ENCODE measurements at regions of chr7 and their contacts with region 1.

Region 1: DNA sequence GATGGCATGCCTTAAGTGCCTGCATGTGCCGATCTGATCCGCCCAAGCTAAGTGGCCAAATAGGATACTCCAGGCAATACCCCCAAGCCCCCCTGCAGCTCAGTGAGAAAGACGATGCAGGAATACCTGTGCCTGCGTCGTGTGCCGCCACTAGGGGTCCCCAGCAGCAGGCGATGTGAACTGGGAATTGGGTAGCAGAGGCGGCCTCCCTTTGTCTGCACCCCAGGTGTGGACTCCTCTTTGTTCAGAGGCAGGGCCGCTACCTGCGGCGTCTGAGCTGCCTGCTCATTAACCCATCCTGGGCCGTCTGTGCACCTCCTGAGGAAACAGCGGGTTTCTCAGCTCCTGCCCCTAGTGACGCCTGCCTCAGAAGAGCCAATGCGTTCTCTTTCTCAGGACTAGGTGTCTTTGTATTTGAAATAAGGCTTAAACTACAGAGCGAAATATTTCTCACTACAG is 4.8 kb upstream of the CHN2 start:
- DNase-seq: peak; percentile 45
- ATAC-seq: peak; percentile 95
- H3K4me3 ChIP-seq: no peak overlapping the region
- H3K27ac ChIP-seq: no peak overlapping the region
- H3K4me1 ChIP-seq: peaks cover 0 to 9% of the 10 kb centered on the region in 2 experiments; a peak in 2 of 4 replicates
- H3K27me3 ChIP-seq: no peaks in the 10 kb centered on the region
- CTCF ChIP-seq: peak; percentile 57 to 90 (median 78); a peak in 5 of 6 replicates
- POLR2A ChIP-seq: no peak
- RAD21 ChIP-seq: peak; percentile 72

Region 2: GRCh38 chr7:28536259-28536658 is 653.5 kb before region 1 on chr7:
- CTCF ChIA-PET with region 1: no interaction called
- POLR2A ChIA-PET with region 1: no interaction called
- RAD21 ChIA-PET with region 1: no interaction called
- intact Hi-C with region 1: no loop called
- DNase-seq: peak; percentile 23
- ATAC-seq: peak; percentile 95
- H3K4me3 ChIP-seq: no peak overlapping the region
- H3K27ac ChIP-seq: no peak overlapping the region
- H3K4me1 ChIP-seq: no peaks in the 10 kb centered on the region
- H3K27me3 ChIP-seq: peaks cover 70% of the 10 kb centered on the region
- CTCF ChIP-seq: peak; percentile 16 to 60 (median 52); a peak in 4 of 6 replicates
- POLR2A ChIP-seq: no peak
- RAD21 ChIP-seq: peak; percentile 34

Region 3: DNA sequence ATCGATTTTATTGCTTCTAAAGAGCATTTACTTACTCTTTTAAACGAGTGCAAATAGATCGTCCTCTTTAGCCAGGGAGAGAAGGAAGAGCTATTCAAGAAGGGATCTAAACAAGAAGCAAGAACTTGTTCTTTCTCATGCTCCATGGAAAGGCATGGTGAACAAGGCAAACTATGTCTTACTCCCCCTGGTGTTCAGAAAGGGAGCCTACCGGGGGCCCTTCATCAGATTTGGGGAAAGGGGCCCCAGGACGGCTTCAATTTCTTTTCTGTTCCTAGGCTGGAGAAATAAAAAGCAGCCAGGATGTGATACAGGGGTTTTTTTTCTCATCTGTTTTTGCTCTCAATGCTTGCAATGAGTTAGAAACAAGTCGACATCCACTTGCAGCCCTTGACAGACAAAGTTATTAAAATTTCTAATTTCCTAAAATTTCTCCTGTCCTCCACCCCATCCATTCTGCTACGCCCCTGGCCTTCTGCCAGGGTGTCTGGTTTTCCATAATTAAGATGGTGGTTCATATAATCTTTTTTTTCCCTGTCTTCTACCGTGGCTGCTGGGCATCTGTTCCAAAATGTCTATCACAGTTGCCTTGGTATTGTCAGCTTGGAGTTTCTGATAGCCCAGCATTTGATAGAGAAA is 563.0 kb before region 1 on chr7:
- CTCF ChIA-PET with region 1: no interaction called
- POLR2A ChIA-PET with region 1: no interaction called
- RAD21 ChIA-PET with region 1: no interaction called
- intact Hi-C with region 1: no loop called
- DNase-seq: peak; percentile 40
- ATAC-seq: peak; percentile 80
- H3K4me3 ChIP-seq: no peak overlapping the region
- H3K27ac ChIP-seq: no peak overlapping the region
- H3K4me1 ChIP-seq: peaks cover 3 to 4% of the 10 kb centered on the region in 2 experiments; a peak in 2 of 4 replicates
- H3K27me3 ChIP-seq: peaks cover 23% of the 10 kb centered on the region
- CTCF ChIP-seq: peak; percentile 48 to 79 (median 77); a peak in 5 of 6 replicates
- POLR2A ChIP-seq: no peak
- RAD21 ChIP-seq: peak; percentile 54

Region 4: GRCh38 chr7:29177963-29178600 is 11.7 kb before region 1 on chr7:
- CTCF ChIA-PET with region 1: interaction called, 14 read pairs
- POLR2A ChIA-PET with region 1: no interaction called
- RAD21 ChIA-PET with region 1: no interaction called
- intact Hi-C with region 1: no loop called
- DNase-seq: no peak
- ATAC-seq: no peak
- H3K4me3 ChIP-seq: no peak overlapping the region
- H3K27ac ChIP-seq: no peak overlapping the region
- H3K4me1 ChIP-seq: no peaks in the 10 kb centered on the region
- H3K27me3 ChIP-seq: no peaks in the 10 kb centered on the region
- CTCF ChIP-seq: no peak
- POLR2A ChIP-seq: no peak
- RAD21 ChIP-seq: no peak

Region 5: GRCh38 chr7:29274146-29275017 is 84.6 kb after region 1 on chr7:
- CTCF ChIA-PET with region 1: no interaction called
- POLR2A ChIA-PET with region 1: no interaction called
- RAD21 ChIA-PET with region 1: no interaction called
- intact Hi-C with region 1: no loop called
- DNase-seq: no peak
- ATAC-seq: no peak
- H3K4me3 ChIP-seq: no peak overlapping the region
- H3K27ac ChIP-seq: no peak overlapping the region
- H3K4me1 ChIP-seq: no peaks in the 10 kb centered on the region
- H3K27me3 ChIP-seq: 0 out of 2 replicates have a peak, but pooled peaks cover 6% of the 10 kb centered on the region
- CTCF ChIP-seq: no peak
- POLR2A ChIP-seq: no peak
- RAD21 ChIP-seq: no peak

Measured in HCT116 (cell line).